Ovary (tissue), 10 donors: ENCODE measurements at regions of chr4 and their contacts with region 1.

Region 1: GRCh38 chr4:57064811-57065711 is 45.1 kb downstream of the IGFBP7 start:
- DNase-seq: peak; percentile 75 to 88 (median 76)
- H3K4me3 ChIP-seq: peak overlapping the region; percentile 17
- H3K27ac ChIP-seq: peak overlapping the region; percentile 42 to 74
- H3K4me1 ChIP-seq: peaks cover 29% of the 10 kb centered on the region
- H3K27me3 ChIP-seq: no peaks in the 10 kb centered on the region
- CTCF ChIP-seq: no peak
- EP300 ChIP-seq: no peak
- POLR2A ChIP-seq: no peak

Region 2: DNA sequence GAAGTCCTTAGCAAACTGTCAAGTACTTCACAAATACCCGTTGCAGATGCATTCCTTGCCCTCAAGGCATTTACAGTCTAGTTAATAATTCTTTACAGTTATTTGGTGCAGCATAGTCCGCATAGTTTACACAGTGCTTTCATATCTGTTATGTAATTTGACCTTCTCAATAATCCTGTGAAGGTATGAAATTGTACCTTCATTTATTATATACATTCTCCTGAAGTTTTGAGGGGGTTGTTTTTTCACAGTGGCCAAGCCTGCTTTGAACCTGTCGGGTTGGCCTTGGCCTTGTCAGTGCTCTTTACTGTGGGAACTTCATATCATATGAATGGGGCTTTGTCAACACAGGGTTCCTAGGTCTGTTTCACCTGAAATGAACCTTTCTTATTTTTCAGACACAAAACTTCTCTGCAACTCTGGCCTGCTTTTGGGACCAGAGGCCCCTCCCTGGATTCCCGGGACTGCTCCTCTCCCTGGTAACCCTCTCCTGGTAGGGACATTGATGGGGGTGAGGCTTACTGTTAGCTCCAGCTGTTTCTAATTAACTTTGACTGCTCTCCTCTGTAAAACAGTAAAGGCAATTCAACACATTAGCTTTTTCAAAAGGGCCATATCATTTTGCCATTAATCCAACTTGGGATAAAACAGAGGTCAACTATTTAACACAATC is 36.1 kb after region 1 on chr4:
- intact Hi-C with region 1: loop called in 2 of 4 experiments (anchors 1 to 5 kb)
- DNase-seq: no peak
- H3K4me3 ChIP-seq: no peak overlapping the region
- H3K27ac ChIP-seq: peak overlapping the region; percentile 35 to 72
- H3K4me1 ChIP-seq: peaks cover 28% of the 10 kb centered on the region
- H3K27me3 ChIP-seq: no peaks in the 10 kb centered on the region
- CTCF ChIP-seq: no peak
- EP300 ChIP-seq: no peak
- POLR2A ChIP-seq: no peak